K562 (cell line): ENCODE measurements at regions of chr20 and their contacts with region 1.

Region 1: DNA sequence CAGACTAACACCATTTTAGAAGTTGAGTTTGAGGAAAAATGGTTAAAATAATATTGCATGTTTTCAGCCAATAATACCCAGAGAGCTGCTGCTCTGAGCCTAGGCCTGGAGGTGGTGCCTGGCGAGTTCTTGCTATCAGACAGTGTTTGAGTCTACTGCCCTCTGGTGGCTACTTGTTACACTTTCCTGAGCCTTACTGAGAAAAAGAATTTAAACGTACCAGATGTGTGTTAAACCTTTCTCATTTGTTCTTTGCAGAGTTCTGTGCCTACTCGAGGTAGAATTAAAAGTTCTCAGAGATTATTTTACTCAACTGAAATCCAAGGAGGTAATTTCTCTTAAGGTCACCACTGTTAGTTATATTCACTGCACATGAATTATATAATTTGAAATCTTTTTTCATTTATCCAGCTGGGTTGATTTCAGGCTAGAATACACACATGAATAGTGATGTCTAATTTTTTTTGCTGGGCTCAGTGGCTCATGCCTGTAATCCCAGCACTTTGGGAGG is 38.2 kb downstream of the SHLD1 start:
- DNase-seq: peak; percentile 69 to 87 (median 73)
- ATAC-seq: peak; percentile 90
- H3K4me3 ChIP-seq: no peak overlapping the region
- H3K27ac ChIP-seq: no peak overlapping the region
- H3K4me1 ChIP-seq: peaks cover 16 to 24% of the 10 kb centered on the region in 2 experiments; a peak in 4 of 5 replicates
- H3K27me3 ChIP-seq: no peaks in the 10 kb centered on the region
- CTCF ChIP-seq: peak; percentile 73 to 97 (median 90)
- EP300 ChIP-seq: no peak
- POLR2A ChIP-seq: no peak
- RAD21 ChIP-seq: peak; percentile 93 to 95

Region 2: GRCh38 chr20:5529331-5530148 is 258.9 kb before region 1 on chr20:
- CTCF ChIA-PET with region 1: interaction called, 24 read pairs
- POLR2A ChIA-PET with region 1: no interaction called
- in situ Hi-C with region 1: no loop called
- intact Hi-C with region 1: loop called (anchors 1 kb)
- DNase-seq: peak; percentile 59 to 88 (median 64)
- ATAC-seq: peak; percentile 96
- H3K4me3 ChIP-seq: no peak overlapping the region
- H3K27ac ChIP-seq: no peak overlapping the region
- H3K4me1 ChIP-seq: peaks cover 9 to 10% of the 10 kb centered on the region in 2 experiments; a peak in 4 of 5 replicates
- H3K27me3 ChIP-seq: peaks cover 0 to 9% of the 10 kb centered on the region in 2 experiments; a peak in 1 of 5 replicates
- CTCF ChIP-seq: peak; percentile 82 to 91 (median 83)
- EP300 ChIP-seq: no peak
- POLR2A ChIP-seq: no peak
- RAD21 ChIP-seq: peak; percentile 72 to 85

Region 3: GRCh38 chr20:5569021-5569420 is 219.4 kb before region 1 on chr20:
- CTCF ChIA-PET with region 1: interaction called, 8 read pairs
- POLR2A ChIA-PET with region 1: interaction called, 4 read pairs
- in situ Hi-C with region 1: loop called (anchors 25 kb)
- intact Hi-C with region 1: loop called (anchors 1 kb)
- DNase-seq: peak; percentile 8 to 48 (median 16)
- ATAC-seq: peak; percentile 79
- H3K4me3 ChIP-seq: no peak overlapping the region
- H3K27ac ChIP-seq: no peak overlapping the region
- H3K4me1 ChIP-seq: no peaks in the 10 kb centered on the region
- H3K27me3 ChIP-seq: no peaks in the 10 kb centered on the region
- CTCF ChIP-seq: peak; percentile 4 to 59 (median 37); a peak in 4 of 6 replicates
- EP300 ChIP-seq: no peak
- POLR2A ChIP-seq: no peak
- RAD21 ChIP-seq: peak; percentile 61 to 63

Region 4: DNA sequence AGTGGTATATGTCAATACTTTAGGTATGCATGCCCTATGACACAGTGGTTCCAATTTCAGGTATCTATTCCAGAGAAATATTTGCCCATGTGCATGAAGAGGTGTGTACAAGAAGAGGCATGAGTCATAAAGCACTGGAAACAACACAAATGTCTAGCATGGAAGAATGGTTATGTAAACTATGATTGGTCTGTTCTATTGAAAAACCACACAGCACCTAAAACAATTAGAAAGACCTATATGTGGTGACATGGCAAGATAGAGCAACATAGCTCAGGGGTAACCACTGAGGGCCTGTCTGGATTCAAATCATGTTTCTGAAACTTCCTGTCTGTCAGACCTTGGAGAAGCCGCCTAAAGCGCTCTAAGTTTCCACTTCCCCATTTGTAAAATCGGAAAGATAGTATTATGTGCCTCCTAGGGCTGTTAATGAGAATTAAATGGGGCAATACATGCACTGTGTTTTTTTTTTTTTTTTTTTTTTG is 114.2 kb before region 1 on chr20:
- CTCF ChIA-PET with region 1: no interaction called
- POLR2A ChIA-PET with region 1: interaction called, 3 read pairs
- in situ Hi-C with region 1: no loop called
- intact Hi-C with region 1: loop called (anchors 10 kb)
- DNase-seq: peak in 1 of 4 experiments; percentile 28
- ATAC-seq: peak; percentile 44
- H3K4me3 ChIP-seq: no peak overlapping the region
- H3K27ac ChIP-seq: peak overlapping the region; percentile 8; the same call in 1 of the 3 replicates
- H3K4me1 ChIP-seq: peaks cover 6 to 21% of the 10 kb centered on the region in 2 experiments; a peak in 3 of 5 replicates
- H3K27me3 ChIP-seq: no peaks in the 10 kb centered on the region
- CTCF ChIP-seq: no peak
- EP300 ChIP-seq: no peak
- POLR2A ChIP-seq: no peak
- RAD21 ChIP-seq: no peak

Region 5: DNA sequence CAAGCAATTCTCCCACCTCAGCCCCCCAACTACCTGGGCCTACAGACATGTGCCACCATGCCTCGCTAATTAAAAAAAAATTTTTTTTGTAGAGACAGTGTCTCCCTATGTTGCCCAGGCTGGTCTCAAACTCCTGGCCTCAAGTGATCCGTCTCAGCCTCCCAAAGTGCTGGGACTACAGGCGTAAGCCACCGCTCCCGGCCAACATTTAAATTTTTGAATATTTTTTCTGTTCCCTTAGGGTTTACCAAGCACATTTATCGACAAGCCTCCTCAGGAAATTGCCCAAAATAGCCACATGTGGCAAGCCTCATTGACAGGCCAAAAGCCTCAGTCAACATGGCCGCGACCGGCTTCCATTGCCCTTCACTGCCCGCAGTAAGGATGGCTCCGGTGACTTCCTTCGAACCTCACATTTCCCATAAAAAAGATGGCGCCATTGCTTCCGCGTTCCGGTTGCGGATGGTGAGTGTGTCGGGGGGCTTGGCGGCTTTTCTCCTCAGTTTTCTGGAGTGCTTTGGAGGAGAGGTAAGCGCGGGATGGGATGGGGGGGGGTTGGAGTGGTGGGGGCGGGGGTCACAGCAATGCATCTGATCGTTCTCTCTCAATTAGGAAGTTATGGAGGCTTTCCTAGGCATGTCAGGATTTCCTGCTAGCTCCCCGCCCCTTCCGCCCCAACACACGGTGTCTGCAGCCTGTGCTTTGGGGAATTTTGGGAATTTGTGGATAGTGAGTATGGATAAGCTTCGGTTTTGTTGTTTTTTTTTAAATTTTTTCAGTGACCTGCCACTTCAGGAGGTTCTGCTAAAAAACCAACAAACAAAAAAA is 38.3 kb before region 1 on chr20 and contains the start of gene SHLD1:
- CTCF ChIA-PET with region 1: no interaction called
- POLR2A ChIA-PET with region 1: no interaction called
- in situ Hi-C with region 1: no loop called
- intact Hi-C with region 1: loop called (anchors 5 kb)
- DNase-seq: peak; percentile 67 to 90 (median 72)
- ATAC-seq: peak; percentile 95
- H3K4me3 ChIP-seq: peak within 1 kb of the TSS; percentile 48
- H3K27ac ChIP-seq: peak within 1 kb of the TSS; percentile 74
- H3K4me1 ChIP-seq: peaks cover 13 to 14% of the 10 kb centered on the region in 2 experiments
- H3K27me3 ChIP-seq: no peaks in the 10 kb centered on the region
- CTCF ChIP-seq: no peak
- EP300 ChIP-seq: no peak
- POLR2A ChIP-seq: peak; percentile 58
- RAD21 ChIP-seq: no peak
- polyA plus RNA-seq, gene SHLD1: 20.7 to 21.6 TPM

Region 6: DNA sequence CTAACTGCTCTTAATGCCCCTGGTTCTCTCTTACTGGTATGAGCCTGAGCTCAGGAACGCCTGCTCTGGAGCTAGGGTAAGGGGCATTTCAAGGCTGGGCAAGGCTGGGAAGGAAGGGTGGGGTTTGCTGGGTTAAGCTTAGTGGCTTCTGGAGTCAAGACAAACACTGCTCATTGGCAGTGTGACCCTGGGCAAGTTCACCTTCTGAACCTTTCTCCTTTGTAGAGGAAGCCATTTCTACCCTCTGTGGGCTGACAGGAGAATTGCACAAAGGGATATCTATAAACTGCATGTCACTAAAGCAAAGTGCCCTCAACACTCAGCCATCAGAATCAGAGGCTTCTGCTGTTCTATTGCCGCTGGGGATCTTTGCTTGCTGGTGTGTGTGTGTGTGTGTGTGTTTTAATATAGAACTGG is 285.7 kb after region 1 on chr20:
- CTCF ChIA-PET with region 1: no interaction called
- POLR2A ChIA-PET with region 1: no interaction called
- in situ Hi-C with region 1: no loop called
- intact Hi-C with region 1: loop called (anchors 5 kb)
- DNase-seq: peak in 3 of 4 experiments; percentile 18 to 48 (median 37)
- ATAC-seq: peak; percentile 89
- H3K4me3 ChIP-seq: no peak overlapping the region
- H3K27ac ChIP-seq: no peak overlapping the region
- H3K4me1 ChIP-seq: peaks cover 0 to 9% of the 10 kb centered on the region in 2 experiments; a peak in 2 of 5 replicates
- H3K27me3 ChIP-seq: peaks cover 0 to 2% of the 10 kb centered on the region in 2 experiments; a peak in 1 of 5 replicates
- CTCF ChIP-seq: peak; percentile 34 to 46 (median 43); a peak in 5 of 6 replicates
- EP300 ChIP-seq: no peak
- POLR2A ChIP-seq: no peak
- RAD21 ChIP-seq: peak in 1 of 2 experiments; percentile 69; a peak in 2 of 4 replicates